GM10248 (cell line): ENCODE measurements at regions of chr17 and their contacts with region 1.

Region 1: GRCh38 chr17:27332485-27333409 is 38.8 kb downstream of the WSB1 start:
- DNase-seq: peak; percentile 91
- CTCF ChIP-seq: peak; percentile 81

Region 2: GRCh38 chr17:27319536-27320221 is 13.1 kb before region 1 on chr17:
- CTCF ChIA-PET with region 1: interaction called, 14 read pairs
- POLR2A ChIA-PET with region 1: interaction called, 3 read pairs
- DNase-seq: no peak
- CTCF ChIP-seq: no peak

Region 3: DNA sequence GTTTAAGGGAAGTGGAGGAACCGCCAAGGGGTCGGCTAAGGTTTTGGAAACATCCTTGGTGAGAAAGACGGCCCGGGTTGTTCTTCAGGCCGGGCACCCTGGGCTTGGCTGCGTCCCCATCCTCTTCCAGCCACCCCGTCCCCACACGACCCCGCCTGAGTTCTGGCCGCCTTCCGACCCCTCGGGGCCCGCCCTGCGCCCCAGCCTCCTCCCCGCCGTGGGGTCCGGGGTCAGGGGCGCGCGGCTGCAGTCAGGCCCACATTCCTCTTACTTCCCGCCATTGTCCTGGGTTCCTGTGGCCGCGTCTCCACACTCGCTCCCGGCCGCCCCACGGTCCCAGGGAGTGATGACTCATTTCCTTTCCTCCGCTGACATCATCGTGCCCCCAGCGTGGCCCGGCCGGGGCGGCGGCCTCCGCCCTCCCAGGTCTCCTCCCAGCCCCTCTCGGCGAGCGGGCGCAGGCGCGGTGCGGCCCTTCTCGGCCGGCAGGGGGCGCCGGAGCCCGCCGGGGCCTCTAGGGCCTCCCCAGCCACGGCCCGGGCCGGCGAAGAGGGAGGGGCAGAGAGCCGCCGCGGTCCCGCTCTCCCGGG is 20.8 kb after region 1 on chr17:
- CTCF ChIA-PET with region 1: interaction called, 10 read pairs
- POLR2A ChIA-PET with region 1: no interaction called
- DNase-seq: peak; percentile 97
- CTCF ChIP-seq: peak; percentile 92